Endothelial cell of umbilical vein (primary cell): ENCODE measurements at regions of chr7 and their contacts with region 1.

Region 1: DNA sequence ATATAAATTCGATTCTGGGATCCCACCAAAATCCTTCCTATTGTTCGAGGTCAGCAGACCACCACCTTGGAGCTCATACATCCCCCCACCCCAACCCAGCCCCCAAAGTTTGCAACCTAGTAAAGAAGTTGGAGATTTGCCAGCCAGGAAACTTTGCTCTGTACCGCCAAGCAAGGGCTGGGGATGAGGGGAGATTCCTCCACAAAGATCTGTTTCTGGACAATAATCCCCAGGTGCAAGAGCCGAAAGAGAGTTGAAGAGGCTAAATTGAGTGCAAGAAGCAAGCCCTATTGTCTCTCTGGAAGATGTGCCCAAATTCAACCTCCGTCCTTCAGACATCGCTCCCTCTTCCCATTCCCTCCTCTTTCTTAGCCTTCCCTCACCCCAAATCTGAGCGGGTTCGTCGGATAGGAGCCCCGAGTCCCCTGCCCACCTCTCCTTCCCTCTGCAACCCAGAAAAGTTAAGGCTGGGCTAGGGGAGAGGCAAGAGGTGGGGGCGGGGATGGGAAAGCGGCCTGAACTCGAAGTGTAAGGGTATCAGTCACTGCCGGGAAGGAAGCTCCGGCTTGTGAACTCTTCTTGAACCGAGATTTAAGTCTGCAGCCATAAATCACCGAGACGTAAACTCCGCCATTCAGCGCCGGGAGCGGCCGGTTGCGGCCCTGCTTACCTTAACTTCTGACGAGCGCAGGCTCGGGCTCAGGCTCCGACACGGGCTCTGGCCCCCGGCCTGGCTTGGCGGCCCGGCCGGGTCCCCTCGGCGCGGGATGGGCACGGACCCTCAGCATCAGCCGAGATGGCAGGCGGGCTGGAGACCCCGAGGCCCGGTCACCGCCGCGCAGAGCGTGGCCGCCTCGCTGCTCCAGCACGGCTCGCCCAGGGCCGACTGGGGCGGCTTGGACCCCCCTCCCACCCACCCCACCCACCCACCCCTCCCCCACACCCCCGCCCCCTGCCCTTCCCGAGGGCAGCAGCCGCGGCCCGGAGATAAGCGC is 10.8 kb upstream of the HOXA2 start:
- DNase-seq: peak; percentile 92
- H3K4me3 ChIP-seq: peak overlapping the region; percentile 55 to 84 (median 72)
- H3K27ac ChIP-seq: peak overlapping the region; percentile 96
- H3K4me1 ChIP-seq: peaks cover 72% of the 10 kb centered on the region
- H3K27me3 ChIP-seq: no peaks in the 10 kb centered on the region
- CTCF ChIP-seq: no peak
- POLR2A ChIP-seq: peak; percentile 85

Region 2: DNA sequence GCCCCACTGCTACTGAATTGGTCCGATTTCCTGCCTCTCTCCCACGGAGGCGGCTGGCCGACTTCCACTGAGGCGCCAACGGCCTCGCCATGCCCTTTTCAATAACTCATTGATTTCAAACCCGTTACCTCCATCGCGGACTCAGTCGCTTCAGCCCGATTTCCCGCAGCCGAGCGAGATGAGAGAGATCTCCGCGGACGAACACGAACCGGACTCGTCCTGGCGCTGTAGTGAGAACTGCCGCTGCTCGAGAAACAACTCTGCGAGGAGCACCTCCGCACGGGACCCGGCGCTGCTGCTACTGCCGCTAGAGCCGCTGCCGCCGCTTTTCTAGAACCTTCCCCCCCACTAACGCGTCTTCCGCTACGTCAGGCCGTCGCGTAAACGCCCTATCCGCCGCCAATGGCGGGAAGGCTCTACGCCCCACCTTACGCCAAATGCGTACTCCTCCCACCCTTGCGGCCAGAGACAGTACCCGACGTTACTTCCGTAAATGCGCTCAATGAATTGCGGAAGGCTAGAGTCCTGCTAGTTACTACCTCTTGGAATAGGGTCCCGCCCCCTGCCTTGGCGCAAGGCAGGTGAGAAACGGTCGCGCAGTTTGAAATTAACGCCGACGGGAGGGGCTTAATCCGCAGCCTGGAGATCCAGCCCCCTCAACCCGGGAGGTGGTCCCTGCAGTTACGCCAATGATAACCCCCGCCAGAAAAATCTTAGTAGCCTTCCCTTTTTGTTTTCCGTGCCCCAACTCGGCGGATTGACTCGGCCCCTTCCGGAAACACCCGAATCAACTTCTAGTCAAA is 912.6 kb before region 1 on chr7 and contains the start of gene HNRNPA2B1:
- CTCF ChIA-PET with region 1: no interaction called
- POLR2A ChIA-PET with region 1: no interaction called
- dilution Hi-C with region 1: no loop called
- intact Hi-C with region 1: loop called (anchors 5 kb)
- DNase-seq: peak; percentile 99
- H3K4me3 ChIP-seq: peak within 1 kb of the TSS; percentile 98 to 100 (median 98)
- H3K27ac ChIP-seq: peak within 1 kb of the TSS; percentile 97
- H3K4me1 ChIP-seq: peaks cover 40% of the 10 kb centered on the region
- H3K27me3 ChIP-seq: no peaks in the 10 kb centered on the region
- CTCF ChIP-seq: no peak
- POLR2A ChIP-seq: peak; percentile 100
- total RNA-seq, gene HNRNPA2B1: 703 and 717 TPM in 2 replicates

Region 3: GRCh38 chr7:26699766-26700165 is 413.5 kb before region 1 on chr7:
- CTCF ChIA-PET with region 1: no interaction called
- POLR2A ChIA-PET with region 1: no interaction called
- dilution Hi-C with region 1: no loop called
- intact Hi-C with region 1: no loop called
- DNase-seq: no peak
- H3K4me3 ChIP-seq: no peak overlapping the region
- H3K27ac ChIP-seq: no peak overlapping the region
- H3K4me1 ChIP-seq: peaks cover 2% of the 10 kb centered on the region
- H3K27me3 ChIP-seq: no peaks in the 10 kb centered on the region
- CTCF ChIP-seq: no peak
- POLR2A ChIP-seq: no peak

Region 4: DNA sequence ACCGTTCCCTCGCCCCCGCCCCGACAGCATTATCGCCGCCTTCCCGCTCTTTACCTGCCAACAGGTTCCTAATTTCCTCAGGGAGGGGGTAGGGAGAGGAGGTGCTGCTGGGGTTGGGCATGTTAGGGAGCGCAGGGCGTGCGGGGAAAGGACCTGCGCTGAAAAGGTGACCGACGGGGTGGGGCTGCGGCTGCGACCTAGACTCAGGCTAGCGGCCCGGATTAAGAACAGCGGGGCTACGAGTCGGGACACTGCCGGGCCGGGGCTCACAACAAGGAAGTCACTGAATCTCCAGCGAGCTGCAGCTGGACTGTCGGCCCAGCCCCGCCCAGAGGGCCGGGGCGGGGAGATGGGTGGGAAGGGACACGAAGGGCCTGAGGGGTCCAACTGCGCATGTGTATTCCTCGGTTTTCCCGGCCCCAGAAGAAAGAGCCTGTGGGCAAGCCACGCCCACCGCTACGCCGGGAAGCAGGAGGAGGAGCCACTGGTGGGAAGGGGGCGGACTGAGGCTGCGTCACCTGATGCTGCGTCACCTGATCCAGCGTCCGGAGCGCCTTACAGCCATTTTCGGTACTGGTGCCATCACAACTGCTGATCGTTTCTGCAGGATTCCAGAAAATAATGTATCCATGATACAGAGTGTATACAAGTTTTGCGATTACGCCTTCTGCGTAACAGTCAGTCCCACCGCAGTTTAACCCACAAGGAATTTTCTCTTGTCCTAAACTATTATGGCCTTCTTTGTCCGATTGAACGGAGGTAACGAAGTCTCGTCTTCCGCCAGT is 248.8 kb before region 1 on chr7 and contains the start of gene SKAP2:
- CTCF ChIA-PET with region 1: no interaction called
- POLR2A ChIA-PET with region 1: no interaction called
- dilution Hi-C with region 1: no loop called
- intact Hi-C with region 1: loop called (anchors 1 kb)
- DNase-seq: peak; percentile 99
- H3K4me3 ChIP-seq: peak within 1 kb of the TSS; percentile 59 to 85 (median 72)
- H3K27ac ChIP-seq: peak within 1 kb of the TSS; percentile 90
- H3K4me1 ChIP-seq: peaks cover 15% of the 10 kb centered on the region
- H3K27me3 ChIP-seq: no peaks in the 10 kb centered on the region
- CTCF ChIP-seq: no peak
- POLR2A ChIP-seq: peak; percentile 99
- total RNA-seq, gene SKAP2: 27.6 and 30.5 TPM in 2 replicates

Region 5: GRCh38 chr7:27102581-27103442 is 10.4 kb before region 1 on chr7 and contains the start of gene HOXA2:
- CTCF ChIA-PET with region 1: interaction called, 70 read pairs
- POLR2A ChIA-PET with region 1: interaction called, 5 read pairs
- dilution Hi-C with region 1: no loop called
- intact Hi-C with region 1: loop called (anchors 1 kb)
- DNase-seq: peak; percentile 86
- H3K4me3 ChIP-seq: peak within 1 kb of the TSS; percentile 35 to 92 (median 45)
- H3K27ac ChIP-seq: peak within 1 kb of the TSS; percentile 93
- H3K4me1 ChIP-seq: peaks cover 90% of the 10 kb centered on the region
- H3K27me3 ChIP-seq: no peaks in the 10 kb centered on the region
- CTCF ChIP-seq: no peak
- POLR2A ChIP-seq: no peak
- total RNA-seq, gene HOXA2: 2.2 and 2.3 TPM in 2 replicates

Region 6: GRCh38 chr7:27130540-27131389 is 17.5 kb after region 1 on chr7 and contains the start of gene HOXA4:
- CTCF ChIA-PET with region 1: interaction called, 11 read pairs
- POLR2A ChIA-PET with region 1: interaction called, 6 read pairs
- dilution Hi-C with region 1: no loop called
- intact Hi-C with region 1: loop called (anchors 1 kb)
- DNase-seq: peak; percentile 89
- H3K4me3 ChIP-seq: peak within 1 kb of the TSS; percentile 36 to 60 (median 58)
- H3K27ac ChIP-seq: peak within 1 kb of the TSS; percentile 67
- H3K4me1 ChIP-seq: peaks cover 66% of the 10 kb centered on the region
- H3K27me3 ChIP-seq: no peaks in the 10 kb centered on the region
- CTCF ChIP-seq: no peak
- POLR2A ChIP-seq: peak; percentile 57
- total RNA-seq, gene HOXA4: 7.5 and 8.1 TPM in 2 replicates

Region 7: DNA sequence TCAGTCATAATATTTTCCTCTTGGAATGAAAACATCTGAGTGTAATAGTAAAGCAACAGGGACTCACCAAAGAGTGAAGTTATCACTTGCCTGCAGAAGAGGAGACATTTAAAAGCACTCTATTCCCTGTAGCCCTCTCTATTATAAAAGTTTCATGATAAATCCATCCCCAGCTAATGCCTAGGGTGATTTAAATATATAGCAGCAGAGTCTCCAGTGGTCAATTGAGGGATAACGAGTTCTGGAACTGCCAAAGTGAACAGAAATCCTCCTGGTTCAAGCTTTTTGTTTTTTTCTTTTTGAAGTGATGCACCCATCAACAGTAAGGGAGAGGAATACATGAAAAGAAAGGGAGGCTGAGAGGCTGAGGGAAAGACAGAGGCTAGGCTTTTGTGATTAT is 216.7 kb after region 1 on chr7:
- CTCF ChIA-PET with region 1: no interaction called
- POLR2A ChIA-PET with region 1: no interaction called
- dilution Hi-C with region 1: no loop called
- intact Hi-C with region 1: no loop called
- DNase-seq: no peak
- H3K4me3 ChIP-seq: no peak overlapping the region
- H3K27ac ChIP-seq: no peak overlapping the region
- H3K4me1 ChIP-seq: no peaks in the 10 kb centered on the region
- H3K27me3 ChIP-seq: peaks cover 3 to 6% of the 10 kb centered on the region in 2 experiments
- CTCF ChIP-seq: no peak
- POLR2A ChIP-seq: no peak